CD8-positive, alpha-beta T cell (primary cell): ENCODE measurements at regions of chr10 and their contacts with region 1.

Region 1: GRCh38 chr10:31759799-31760626 is 168.6 kb downstream of the ARHGAP12 start:
- DNase-seq: peak; percentile 90 to 98 (median 94)
- ATAC-seq: peak; percentile 93
- H3K4me3 ChIP-seq: peak overlapping the region; percentile 98 to 99
- H3K4me3 Mint-ChIP-seq: peak overlapping the region; percentile 88
- H3K27ac ChIP-seq: peak overlapping the region; percentile 92 to 95
- H3K27ac Mint-ChIP-seq: peak overlapping the region; percentile 97
- H3K4me1 ChIP-seq: peaks cover 8% of the 10 kb centered on the region
- H3K4me1 Mint-ChIP-seq: peaks cover 14% of the 10 kb centered on the region
- H3K27me3 ChIP-seq: no peaks in the 10 kb centered on the region
- H3K27me3 Mint-ChIP-seq: no peaks in the 10 kb centered on the region
- CTCF ChIP-seq: no peak

Region 2: GRCh38 chr10:30359373-30360206 is 1400.4 kb before region 1 on chr10:
- CTCF ChIA-PET with region 1: no interaction called
- POLR2A ChIA-PET with region 1: no interaction called
- intact Hi-C with region 1: loop called in 1 of 2 experiments (anchors 10 kb)
- DNase-seq: peak; percentile 30 to 76 (median 59)
- ATAC-seq: peak; percentile 88
- H3K4me3 ChIP-seq: no peak overlapping the region
- H3K4me3 Mint-ChIP-seq: no peak overlapping the region
- H3K27ac ChIP-seq: no peak overlapping the region
- H3K27ac Mint-ChIP-seq: no peak overlapping the region
- H3K4me1 ChIP-seq: peaks cover 3% of the 10 kb centered on the region
- H3K4me1 Mint-ChIP-seq: no peaks in the 10 kb centered on the region
- H3K27me3 ChIP-seq: peaks cover 0 to 4% of the 10 kb centered on the region in 2 experiments
- H3K27me3 Mint-ChIP-seq: peaks cover 3% of the 10 kb centered on the region
- CTCF ChIP-seq: peak; percentile 60

Region 3: DNA sequence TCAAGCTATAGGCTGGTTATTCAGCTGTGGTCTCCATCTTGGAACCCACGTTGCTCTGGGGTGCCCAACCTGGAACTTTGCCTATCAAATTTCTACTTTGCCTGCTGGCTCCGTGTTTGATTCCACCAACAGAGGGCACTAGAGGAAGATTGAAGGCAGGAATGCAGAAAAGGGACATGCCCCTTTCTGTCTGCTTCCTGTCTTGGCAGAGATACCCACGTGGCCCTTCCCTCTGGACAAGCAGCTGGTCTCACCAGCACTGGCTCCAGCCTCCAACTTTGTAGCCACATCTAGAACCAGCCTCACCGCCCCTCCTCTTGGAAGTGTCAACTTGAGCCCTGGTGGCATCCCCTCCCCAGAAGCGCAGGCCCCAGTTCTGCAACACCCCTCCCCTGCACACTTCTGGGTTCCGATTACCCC is 676.2 kb before region 1 on chr10:
- CTCF ChIA-PET with region 1: no interaction called
- POLR2A ChIA-PET with region 1: no interaction called
- intact Hi-C with region 1: loop called in 1 of 2 experiments (anchors 10 kb)
- DNase-seq: peak; percentile 19 to 73 (median 50)
- ATAC-seq: peak; percentile 75
- H3K4me3 ChIP-seq: no peak overlapping the region
- H3K4me3 Mint-ChIP-seq: no peak overlapping the region
- H3K27ac ChIP-seq: no peak overlapping the region
- H3K27ac Mint-ChIP-seq: no peak overlapping the region
- H3K4me1 ChIP-seq: no peaks in the 10 kb centered on the region
- H3K4me1 Mint-ChIP-seq: peaks cover 4% of the 10 kb centered on the region
- H3K27me3 ChIP-seq: no peaks in the 10 kb centered on the region
- H3K27me3 Mint-ChIP-seq: no peaks in the 10 kb centered on the region
- CTCF ChIP-seq: no peak

Region 4: DNA sequence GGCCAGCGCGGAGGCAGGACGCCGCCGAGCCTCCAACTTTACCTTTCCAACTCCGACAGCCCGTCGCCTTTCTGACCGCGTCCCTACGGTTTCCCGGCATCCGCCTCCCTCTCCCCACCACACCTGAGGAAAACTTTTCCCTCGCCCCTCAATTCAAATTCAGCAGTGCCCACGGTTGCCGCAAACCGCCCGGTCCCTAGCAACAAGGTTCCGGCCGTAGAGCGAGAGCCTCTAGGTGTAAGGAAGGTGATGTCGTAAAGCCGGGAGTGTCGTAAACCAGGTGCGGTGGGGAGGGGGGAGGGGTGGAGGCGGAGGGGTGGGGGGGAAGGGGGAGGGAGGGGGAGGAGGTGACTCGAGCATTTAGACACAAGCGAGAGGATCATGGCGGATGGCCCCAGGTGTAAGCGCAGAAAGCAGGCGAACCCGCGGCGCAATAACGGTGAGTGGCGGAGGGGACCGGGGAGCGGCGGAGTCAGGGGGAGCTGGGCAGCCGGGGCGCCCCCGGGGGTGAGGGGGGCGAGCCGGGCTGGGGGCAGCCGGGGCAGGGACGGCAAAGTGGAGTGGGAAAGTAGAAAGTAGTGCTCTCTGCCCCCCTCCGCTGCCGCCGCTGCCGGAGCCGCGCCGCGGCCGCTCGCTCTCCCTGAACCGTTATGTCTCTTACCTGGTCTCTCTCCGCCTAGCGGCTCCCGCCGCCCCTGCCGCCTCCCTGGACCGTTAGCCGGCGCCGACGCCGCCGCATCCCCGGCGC is 441.0 kb before region 1 on chr10 and contains the start of gene ZEB1:
- CTCF ChIA-PET with region 1: no interaction called
- POLR2A ChIA-PET with region 1: no interaction called
- intact Hi-C with region 1: loop called (anchors 1 to 2 kb)
- DNase-seq: peak; percentile 83 to 97 (median 90)
- ATAC-seq: peak; percentile 42
- H3K4me3 ChIP-seq: peak within 1 kb of the TSS; percentile 92 to 95
- H3K4me3 Mint-ChIP-seq: peak within 1 kb of the TSS; percentile 100
- H3K27ac ChIP-seq: peak within 1 kb of the TSS; percentile 90 to 95
- H3K27ac Mint-ChIP-seq: peak within 1 kb of the TSS; percentile 100
- H3K4me1 ChIP-seq: peaks cover 28% of the 10 kb centered on the region
- H3K4me1 Mint-ChIP-seq: peaks cover 39% of the 10 kb centered on the region
- H3K27me3 ChIP-seq: no peaks in the 10 kb centered on the region
- H3K27me3 Mint-ChIP-seq: no peaks in the 10 kb centered on the region
- CTCF ChIP-seq: no peak
- total RNA-seq, gene ZEB1: 145 to 153 TPM

Region 5: GRCh38 chr10:31928549-31929260 is 168.7 kb after region 1 on chr10 and contains the start of gene ARHGAP12:
- CTCF ChIA-PET with region 1: no interaction called
- POLR2A ChIA-PET with region 1: no interaction called
- intact Hi-C with region 1: loop called (anchors 5 kb)
- DNase-seq: peak; percentile 70 to 92 (median 84)
- ATAC-seq: peak; percentile 67
- H3K4me3 ChIP-seq: peak within 1 kb of the TSS; percentile 90 to 95
- H3K4me3 Mint-ChIP-seq: peak within 1 kb of the TSS; percentile 94
- H3K27ac ChIP-seq: peak within 1 kb of the TSS; percentile 65 to 87
- H3K27ac Mint-ChIP-seq: peak within 1 kb of the TSS; percentile 83
- H3K4me1 ChIP-seq: peaks cover 41% of the 10 kb centered on the region
- H3K4me1 Mint-ChIP-seq: peaks cover 49% of the 10 kb centered on the region
- H3K27me3 ChIP-seq: no peaks in the 10 kb centered on the region
- H3K27me3 Mint-ChIP-seq: no peaks in the 10 kb centered on the region
- CTCF ChIP-seq: no peak
- total RNA-seq, gene ARHGAP12: 15.7 to 15.9 TPM

Region 6: GRCh38 chr10:32378363-32379317 is 618.6 kb after region 1 on chr10:
- CTCF ChIA-PET with region 1: no interaction called
- POLR2A ChIA-PET with region 1: no interaction called
- intact Hi-C with region 1: loop called in 1 of 2 experiments (anchors 1 kb)
- DNase-seq: peak; percentile 86 to 96 (median 93)
- ATAC-seq: peak; percentile 88
- H3K4me3 ChIP-seq: peak overlapping the region; percentile 72 to 84
- H3K4me3 Mint-ChIP-seq: no peak overlapping the region
- H3K27ac ChIP-seq: peak overlapping the region; percentile 68 to 72
- H3K27ac Mint-ChIP-seq: no peak overlapping the region
- H3K4me1 ChIP-seq: peaks cover 19% of the 10 kb centered on the region
- H3K4me1 Mint-ChIP-seq: peaks cover 26% of the 10 kb centered on the region
- H3K27me3 ChIP-seq: no peaks in the 10 kb centered on the region
- H3K27me3 Mint-ChIP-seq: no peaks in the 10 kb centered on the region
- CTCF ChIP-seq: no peak